CD8-positive, alpha-beta T cell (primary cell): ENCODE measurements at regions of chr3 and their contacts with region 1.

Region 1: DNA sequence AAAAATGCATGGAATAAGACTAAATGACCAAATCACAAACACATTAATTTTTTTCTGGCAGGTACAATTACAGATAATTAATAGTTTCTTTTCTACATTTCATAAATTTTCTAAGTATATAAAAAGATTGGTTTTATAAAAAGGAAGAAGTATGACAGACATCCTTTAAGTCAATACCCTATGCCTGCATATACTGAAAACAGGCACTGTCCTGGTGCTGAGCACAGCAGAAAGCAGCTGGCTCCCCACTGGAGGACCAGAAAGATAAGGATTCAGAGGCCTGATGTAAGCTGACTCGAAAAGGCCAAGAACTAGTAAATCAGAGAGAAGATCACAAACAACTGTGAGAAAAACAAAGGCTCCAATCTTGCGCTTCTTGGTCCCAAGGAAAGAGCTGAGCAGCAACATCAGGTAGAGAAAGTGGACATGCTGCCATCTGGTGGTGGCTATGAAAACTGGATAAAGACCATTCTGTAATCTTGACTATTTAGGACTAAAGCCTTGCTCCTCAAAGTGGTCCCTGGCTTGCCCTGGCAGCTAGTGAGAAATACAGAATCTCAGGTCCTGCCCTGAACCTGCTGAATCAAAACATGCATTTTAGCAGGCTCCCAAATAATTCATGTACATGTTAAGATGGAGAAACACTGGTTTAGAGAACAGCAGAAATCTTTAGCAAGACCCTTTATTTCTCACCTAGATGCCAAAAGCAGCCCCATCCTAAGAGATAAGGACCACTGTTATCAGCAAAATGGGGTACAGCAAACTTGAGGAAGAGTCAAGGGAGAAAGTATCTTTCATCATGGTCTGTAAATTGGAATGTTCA is 76.0 kb downstream of the TRANK1 start:
- DNase-seq: peak in 8 of 9 experiments; percentile 13 to 82 (median 51)
- ATAC-seq: peak; percentile 83
- H3K4me3 ChIP-seq: no peak overlapping the region
- H3K4me3 Mint-ChIP-seq: no peak overlapping the region
- H3K27ac ChIP-seq: no peak overlapping the region
- H3K27ac Mint-ChIP-seq: peak overlapping the region; percentile 67
- H3K4me1 ChIP-seq: peaks cover 6% of the 10 kb centered on the region
- H3K4me1 Mint-ChIP-seq: peaks cover 25% of the 10 kb centered on the region
- H3K27me3 ChIP-seq: no peaks in the 10 kb centered on the region
- H3K27me3 Mint-ChIP-seq: no peaks in the 10 kb centered on the region
- CTCF ChIP-seq: peak; percentile 87

Region 2: GRCh38 chr3:35965908-35966307 is 902.9 kb before region 1 on chr3:
- CTCF ChIA-PET with region 1: interaction called, 3 read pairs
- POLR2A ChIA-PET with region 1: no interaction called
- intact Hi-C with region 1: loop called in 1 of 2 experiments (anchors 2 kb)
- DNase-seq: peak in 1 of 9 experiments; percentile 3
- ATAC-seq: no peak
- H3K4me3 ChIP-seq: no peak overlapping the region
- H3K4me3 Mint-ChIP-seq: no peak overlapping the region
- H3K27ac ChIP-seq: no peak overlapping the region
- H3K27ac Mint-ChIP-seq: no peak overlapping the region
- H3K4me1 ChIP-seq: no peaks in the 10 kb centered on the region
- H3K4me1 Mint-ChIP-seq: peaks cover 8% of the 10 kb centered on the region
- H3K27me3 ChIP-seq: no peaks in the 10 kb centered on the region
- H3K27me3 Mint-ChIP-seq: no peaks in the 10 kb centered on the region
- CTCF ChIP-seq: peak; percentile 41

Region 3: GRCh38 chr3:36729204-36730056 is 139.4 kb before region 1 on chr3:
- CTCF ChIA-PET with region 1: interaction called, 8 read pairs
- POLR2A ChIA-PET with region 1: no interaction called
- intact Hi-C with region 1: loop called in 1 of 2 experiments (anchors 2 kb)
- DNase-seq: peak in 2 of 9 experiments; percentile 45 to 57
- ATAC-seq: peak; percentile 44
- H3K4me3 ChIP-seq: no peak overlapping the region
- H3K4me3 Mint-ChIP-seq: no peak overlapping the region
- H3K27ac ChIP-seq: no peak overlapping the region
- H3K27ac Mint-ChIP-seq: no peak overlapping the region
- H3K4me1 ChIP-seq: no peaks in the 10 kb centered on the region
- H3K4me1 Mint-ChIP-seq: no peaks in the 10 kb centered on the region
- H3K27me3 ChIP-seq: no peaks in the 10 kb centered on the region
- H3K27me3 Mint-ChIP-seq: peaks cover 4% of the 10 kb centered on the region
- CTCF ChIP-seq: peak; percentile 41

Region 4: GRCh38 chr3:36843065-36844051 is 25.5 kb before region 1 on chr3:
- CTCF ChIA-PET with region 1: interaction called, 10 read pairs
- POLR2A ChIA-PET with region 1: no interaction called
- intact Hi-C with region 1: loop called in 1 of 2 experiments (anchors 2 kb)
- DNase-seq: peak in 8 of 9 experiments; percentile 7 to 69 (median 46)
- ATAC-seq: peak; percentile 88
- H3K4me3 ChIP-seq: no peak overlapping the region
- H3K4me3 Mint-ChIP-seq: peak overlapping the region; percentile 35
- H3K27ac ChIP-seq: peak overlapping the region in 1 of 2 experiments; percentile 33
- H3K27ac Mint-ChIP-seq: peak overlapping the region; percentile 62
- H3K4me1 ChIP-seq: peaks cover 17% of the 10 kb centered on the region
- H3K4me1 Mint-ChIP-seq: peaks cover 23% of the 10 kb centered on the region
- H3K27me3 ChIP-seq: no peaks in the 10 kb centered on the region
- H3K27me3 Mint-ChIP-seq: no peaks in the 10 kb centered on the region
- CTCF ChIP-seq: peak; percentile 73

Region 5: DNA sequence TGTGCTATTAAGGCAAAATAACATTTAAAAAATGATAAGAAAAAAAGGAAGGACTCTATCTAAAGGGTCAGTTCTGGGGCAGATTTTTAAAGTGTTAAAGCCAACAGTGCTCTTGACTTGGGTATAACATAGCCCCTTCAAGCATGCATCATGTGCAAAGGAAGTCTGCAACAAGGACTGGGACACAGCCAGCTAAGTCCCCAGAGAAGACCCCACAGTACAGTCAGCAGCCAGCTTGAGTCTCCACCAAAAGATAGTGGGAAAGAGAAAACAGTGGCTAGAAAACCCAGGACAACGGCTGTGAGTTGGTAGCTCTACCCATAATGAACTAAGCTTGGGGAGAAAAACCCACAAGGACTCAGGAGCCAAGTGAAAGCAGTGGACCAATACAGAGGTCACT is 18.1 kb before region 1 on chr3:
- CTCF ChIA-PET with region 1: interaction called, 51 read pairs
- POLR2A ChIA-PET with region 1: no interaction called
- intact Hi-C with region 1: loop called in 1 of 2 experiments (anchors 1 kb)
- DNase-seq: no peak
- ATAC-seq: no peak
- H3K4me3 ChIP-seq: no peak overlapping the region
- H3K4me3 Mint-ChIP-seq: no peak overlapping the region
- H3K27ac ChIP-seq: no peak overlapping the region
- H3K27ac Mint-ChIP-seq: no peak overlapping the region
- H3K4me1 ChIP-seq: no peaks in the 10 kb centered on the region
- H3K4me1 Mint-ChIP-seq: no peaks in the 10 kb centered on the region
- H3K27me3 ChIP-seq: no peaks in the 10 kb centered on the region
- H3K27me3 Mint-ChIP-seq: no peaks in the 10 kb centered on the region
- CTCF ChIP-seq: no peak

Region 6: DNA sequence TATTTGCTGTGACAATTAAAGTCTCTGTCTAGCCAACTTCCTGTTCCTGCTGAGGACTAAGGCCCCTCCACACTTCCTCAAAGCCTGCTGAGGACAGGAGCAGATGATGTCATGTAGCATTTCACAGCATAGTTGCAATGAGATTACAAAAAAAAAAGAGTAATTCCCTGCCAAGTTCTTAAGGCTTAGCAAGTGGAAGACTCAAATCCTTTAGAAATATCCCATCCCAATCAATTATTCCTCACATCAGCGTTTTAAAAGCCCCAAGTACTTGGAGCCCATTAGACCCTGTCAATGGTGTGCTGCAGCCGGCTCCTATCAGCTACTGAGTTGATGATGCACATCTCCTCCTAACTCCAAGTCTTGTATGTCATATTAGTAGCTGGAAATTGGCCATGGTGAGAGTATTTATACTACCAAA is 24.3 kb after region 1 on chr3:
- CTCF ChIA-PET with region 1: interaction called, 28 read pairs
- POLR2A ChIA-PET with region 1: interaction called, 3 read pairs
- intact Hi-C with region 1: no loop called
- DNase-seq: peak in 4 of 9 experiments; percentile 26 to 84 (median 70)
- ATAC-seq: peak; percentile 95
- H3K4me3 ChIP-seq: no peak overlapping the region
- H3K4me3 Mint-ChIP-seq: peak overlapping the region; percentile 26
- H3K27ac ChIP-seq: peak overlapping the region; percentile 28 to 68
- H3K27ac Mint-ChIP-seq: peak overlapping the region; percentile 92
- H3K4me1 ChIP-seq: peaks cover 41% of the 10 kb centered on the region
- H3K4me1 Mint-ChIP-seq: peaks cover 55% of the 10 kb centered on the region
- H3K27me3 ChIP-seq: no peaks in the 10 kb centered on the region
- H3K27me3 Mint-ChIP-seq: no peaks in the 10 kb centered on the region
- CTCF ChIP-seq: no peak